Activated T-helper 1 cell treated with anti-CD3 and anti-CD28 coated beads, Interleukin-12 subunit alpha, Interleukin-12 subunit beta, Interleukin-2, Interleukin-4 antibody, amounts not matched to agents 30 ng/mL and 10 ng/mL and 1 ng/mL, durations not matched to agents 14 hours and 24 hours and 36 hours (primary cell): ENCODE measurements at regions of chr2 and their contacts with region 1.

Region 1: DNA sequence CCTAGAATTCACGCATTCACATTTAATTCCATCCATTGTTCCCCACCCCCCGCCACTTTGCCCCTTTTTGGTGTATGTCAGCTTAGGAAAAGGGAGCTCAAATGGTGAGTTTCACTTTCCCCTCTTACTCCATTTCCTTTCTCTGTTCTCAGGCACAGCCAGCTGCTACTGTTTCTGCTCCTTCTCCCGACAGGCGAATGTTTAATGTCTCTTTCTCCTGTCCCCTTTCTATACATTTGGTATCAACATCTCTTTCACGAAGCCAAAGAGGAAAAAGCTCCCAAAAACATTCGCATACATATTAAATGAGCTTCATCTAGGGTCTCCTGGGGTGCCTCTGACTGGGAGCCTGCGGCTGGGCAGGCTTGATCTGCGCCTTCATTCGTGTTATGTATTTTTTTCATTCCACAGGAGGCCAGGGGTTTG is 124.2 kb upstream of the SATB2 start:
- DNase-seq: no peak
- H3K4me3 Mint-ChIP-seq: no peak overlapping the region
- H3K27ac Mint-ChIP-seq: no peak overlapping the region
- H3K4me1 Mint-ChIP-seq: no peaks in the 10 kb centered on the region
- H3K27me3 Mint-ChIP-seq: peaks cover 7% of the 10 kb centered on the region

Region 2: DNA sequence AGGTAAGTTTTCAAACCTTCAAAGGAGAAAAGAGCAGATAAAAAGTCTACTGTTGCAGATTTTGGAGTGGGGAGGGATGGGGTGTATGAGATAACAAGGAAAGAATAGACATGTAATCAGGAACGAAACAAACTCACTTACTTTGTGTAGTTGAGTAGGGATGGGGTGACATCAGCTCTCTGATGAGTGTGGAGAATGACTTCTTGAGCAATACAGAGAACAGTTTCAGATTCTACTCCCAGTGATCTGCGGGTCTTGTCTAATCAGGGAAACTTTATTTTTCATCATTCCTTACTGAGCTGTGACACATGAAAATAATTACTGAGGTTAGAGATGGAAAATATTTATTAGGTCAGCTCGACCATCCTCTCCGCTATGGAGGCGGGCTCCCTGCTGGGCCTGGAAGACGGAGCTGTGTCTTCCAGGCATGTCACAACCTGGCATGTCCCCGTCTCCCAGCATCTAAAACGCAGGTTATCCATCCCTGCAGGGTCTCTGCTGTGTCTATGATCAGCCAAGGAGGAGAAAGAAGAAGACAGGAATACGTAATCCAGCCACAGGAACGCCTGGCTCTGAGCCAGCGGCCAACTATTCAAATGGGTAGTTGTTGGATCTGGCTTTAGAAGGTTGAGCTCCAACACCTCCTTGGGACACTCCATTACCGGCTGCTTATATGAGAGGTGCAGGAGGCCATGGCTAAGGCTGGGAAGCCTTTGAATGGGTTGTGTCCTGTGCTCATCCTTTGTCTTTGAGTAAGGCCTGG is 25.2 kb before region 1 on chr2:
- intact Hi-C with region 1: loop called (anchors 1 kb)
- DNase-seq: no peak
- H3K4me3 Mint-ChIP-seq: no peak overlapping the region
- H3K27ac Mint-ChIP-seq: no peak overlapping the region
- H3K4me1 Mint-ChIP-seq: no peaks in the 10 kb centered on the region
- H3K27me3 Mint-ChIP-seq: peaks cover 5% of the 10 kb centered on the region